ENCODE measurements at regions of chr4 and their contacts with region 1.

Region 1: GRCh38 chr4:2241410-2242353 is at the starts of genes HAUS3 and POLN:
- DNase-seq: peak; percentile 98
- H3K4me3 ChIP-seq: peak within 1 kb of the TSS; percentile 86
- H3K27ac ChIP-seq: peak within 1 kb of the TSS; percentile 71
- H3K4me1 ChIP-seq: peaks cover 56% of the 10 kb centered on the region
- CTCF ChIP-seq: 0 out of 2 replicates have a peak, but pooled peaks have one; percentile 10
- total RNA-seq, gene HAUS3: 15.9 and 20.1 TPM in 2 replicates
- total RNA-seq, gene POLN: 2.7 and 4.4 TPM in 2 replicates

Region 2: GRCh38 chr4:1721004-1721665 is 520.5 kb before region 1 on chr4 and contains the starts of genes TACC3 and TMEM129:
- CTCF ChIA-PET with region 1: no interaction called
- POLR2A ChIA-PET with region 1: no interaction called
- intact Hi-C with region 1: loop called (anchors 5 kb)
- DNase-seq: peak; percentile 98
- H3K4me3 ChIP-seq: peak within 1 kb of the TSS; percentile 94
- H3K27ac ChIP-seq: peak within 1 kb of the TSS; percentile 90
- H3K4me1 ChIP-seq: peaks cover 75% of the 10 kb centered on the region
- CTCF ChIP-seq: no peak
- total RNA-seq, gene TACC3: 100 and 130 TPM in 2 replicates
- total RNA-seq, gene TMEM129: 35.1 and 44.0 TPM in 2 replicates

Region 3: DNA sequence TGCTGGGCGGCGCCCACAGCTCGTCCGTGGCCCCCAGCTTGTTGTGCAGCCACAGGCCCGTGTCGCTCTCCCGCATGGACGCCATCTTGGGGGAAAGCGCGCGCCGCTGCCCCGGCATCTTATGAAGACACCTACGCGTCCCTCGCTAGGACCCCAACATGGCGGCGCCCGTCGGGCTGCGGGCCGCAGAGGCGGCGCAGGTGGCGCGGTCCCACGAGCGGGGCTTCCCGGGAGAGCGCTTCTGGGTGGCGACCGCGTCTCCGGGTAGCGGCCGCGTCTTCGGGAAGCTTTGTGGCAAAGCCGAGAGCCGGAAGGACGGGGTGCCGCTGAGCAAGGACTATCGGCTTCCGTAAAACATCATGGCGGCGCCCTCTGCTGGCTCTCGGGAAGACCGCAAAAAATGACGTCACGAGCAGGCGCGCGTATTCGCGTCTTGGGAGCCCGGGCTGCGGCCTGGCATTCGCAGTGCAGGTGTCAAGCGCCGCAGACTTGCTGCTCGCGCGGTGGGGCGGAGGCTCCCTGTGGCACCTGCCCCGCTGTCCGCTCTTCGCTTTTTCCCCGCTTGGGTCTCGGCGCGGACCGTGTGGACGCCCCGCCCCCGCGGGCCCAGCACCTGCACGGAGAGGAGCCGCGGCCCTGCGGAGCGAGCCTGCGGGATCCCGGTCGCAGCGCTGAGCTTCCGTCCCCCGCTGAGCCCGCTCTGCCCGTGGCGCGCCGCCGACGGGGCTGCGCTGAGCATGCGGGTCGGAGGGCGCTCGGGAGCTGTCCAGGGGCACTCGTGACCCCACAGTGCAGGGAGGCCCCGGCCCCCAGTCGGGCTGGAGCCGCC is 232.6 kb before region 1 on chr4 and contains the start of gene NELFA:
- CTCF ChIA-PET with region 1: no interaction called
- POLR2A ChIA-PET with region 1: no interaction called
- intact Hi-C with region 1: loop called (anchors 5 kb)
- DNase-seq: peak; percentile 98
- H3K4me3 ChIP-seq: peak within 1 kb of the TSS; percentile 97
- H3K27ac ChIP-seq: peak within 1 kb of the TSS; percentile 76
- H3K4me1 ChIP-seq: peaks cover 23% of the 10 kb centered on the region
- CTCF ChIP-seq: 0 out of 2 replicates have a peak, but pooled peaks have one; percentile 34
- total RNA-seq, gene NELFA: 43.5 and 45.5 TPM in 2 replicates

Region 4: DNA sequence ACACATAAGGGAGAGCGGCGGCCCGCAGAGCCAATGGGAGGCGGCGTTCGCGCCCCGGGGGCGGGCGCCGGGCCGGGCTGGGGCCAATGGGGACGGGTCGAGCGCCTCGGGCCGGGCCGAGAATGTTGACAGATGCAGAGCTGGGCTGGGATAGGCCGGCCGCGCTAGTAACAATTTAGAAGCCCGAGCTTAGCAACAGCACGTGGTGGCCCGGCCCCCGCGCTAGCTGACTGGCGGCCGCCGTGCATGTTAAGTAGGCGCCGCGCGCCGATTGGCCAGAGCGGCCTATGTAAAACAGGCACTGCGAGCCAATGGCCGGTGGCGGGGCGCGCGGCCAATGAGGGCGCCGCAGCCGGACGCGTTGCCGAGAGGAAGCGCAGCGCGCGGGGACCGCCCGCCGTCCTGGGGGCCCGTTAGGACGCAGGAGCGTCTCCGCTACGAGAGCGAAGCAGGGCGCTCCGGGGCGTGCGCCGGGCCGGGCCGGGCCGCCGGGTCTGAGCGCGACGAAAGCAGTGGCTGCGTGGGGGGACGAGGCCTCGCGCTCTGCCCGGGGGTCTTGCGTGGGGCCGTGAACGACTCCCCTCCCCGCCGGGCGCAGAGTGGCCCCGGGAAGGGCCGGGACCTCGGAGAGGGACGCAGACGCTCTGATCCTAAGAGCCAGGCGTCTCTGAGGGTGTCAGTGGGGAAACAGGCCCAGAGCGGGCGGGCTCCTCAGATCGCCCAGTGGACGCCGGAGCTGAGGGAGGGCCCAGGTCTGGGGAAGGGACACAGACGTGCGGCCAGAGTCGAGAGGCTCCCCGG is 20.7 kb after region 1 on chr4:
- CTCF ChIA-PET with region 1: no interaction called
- POLR2A ChIA-PET with region 1: interaction called, 7 read pairs
- intact Hi-C with region 1: loop called (anchors 1 kb)
- DNase-seq: peak; percentile 100
- H3K4me3 ChIP-seq: peak overlapping the region; percentile 71
- H3K27ac ChIP-seq: peak overlapping the region; percentile 49
- H3K4me1 ChIP-seq: peaks cover 20% of the 10 kb centered on the region
- CTCF ChIP-seq: no peak

Region 5: GRCh38 chr4:2274320-2275043 is 32.8 kb after region 1 on chr4:
- CTCF ChIA-PET with region 1: no interaction called
- POLR2A ChIA-PET with region 1: no interaction called
- intact Hi-C with region 1: no loop called
- DNase-seq: no peak
- H3K4me3 ChIP-seq: no peak overlapping the region
- H3K27ac ChIP-seq: no peak overlapping the region
- H3K4me1 ChIP-seq: no peaks in the 10 kb centered on the region
- CTCF ChIP-seq: no peak

Region 6: GRCh38 chr4:2290974-2291704 is 49.5 kb after region 1 on chr4:
- CTCF ChIA-PET with region 1: no interaction called
- POLR2A ChIA-PET with region 1: no interaction called
- intact Hi-C with region 1: loop called (anchors 5 kb)
- DNase-seq: peak; percentile 78
- H3K4me3 ChIP-seq: no peak overlapping the region
- H3K27ac ChIP-seq: peak overlapping the region; percentile 38
- H3K4me1 ChIP-seq: peaks cover 24% of the 10 kb centered on the region
- CTCF ChIP-seq: no peak

Region 7: DNA sequence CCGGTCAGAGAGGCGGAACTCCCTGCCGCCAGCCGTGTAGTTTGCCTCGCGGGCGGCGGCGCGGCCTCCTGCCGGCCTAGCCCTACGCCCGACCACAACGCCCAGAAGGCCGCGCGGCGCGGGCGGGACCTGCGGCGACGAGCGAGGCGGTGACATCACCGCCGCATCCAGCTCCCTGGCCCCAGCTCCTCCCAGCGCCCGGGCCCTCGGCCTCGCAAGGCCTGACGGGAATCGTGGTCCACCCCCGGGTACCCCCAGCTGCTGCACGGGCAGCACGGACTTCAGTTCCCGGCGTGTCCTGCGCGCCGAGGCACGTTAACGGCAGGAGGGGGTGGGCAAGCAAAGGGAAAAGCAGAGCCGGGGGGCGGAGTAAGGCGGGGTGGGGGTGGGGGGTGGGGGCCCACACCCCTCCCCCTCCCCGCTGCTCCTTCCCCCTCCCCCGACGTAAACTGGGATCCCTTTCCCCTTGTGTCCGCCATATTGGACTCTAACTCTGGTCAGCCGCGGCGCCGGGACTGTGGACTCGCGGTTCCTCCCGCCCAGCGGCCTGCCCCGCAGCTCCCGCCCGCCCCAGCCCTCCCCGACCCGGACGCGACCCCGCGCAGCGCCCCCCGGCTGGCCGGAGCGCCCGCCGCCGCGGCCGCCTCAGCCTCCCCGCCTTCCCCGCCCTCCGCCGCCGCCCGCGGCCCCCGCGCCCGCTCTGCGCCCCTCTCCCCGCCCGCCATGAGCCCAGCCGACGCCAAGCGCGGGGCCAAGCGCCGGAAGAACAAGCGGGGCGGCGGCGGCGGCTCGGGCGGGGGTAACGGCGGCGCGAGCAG is 294.7 kb after region 1 on chr4 and contains the start of gene FAM193A:
- CTCF ChIA-PET with region 1: no interaction called
- POLR2A ChIA-PET with region 1: interaction called, 3 read pairs
- intact Hi-C with region 1: loop called (anchors 1 kb)
- DNase-seq: peak; percentile 100
- H3K4me3 ChIP-seq: peak within 1 kb of the TSS; percentile 95
- H3K27ac ChIP-seq: peak within 1 kb of the TSS; percentile 68
- H3K4me1 ChIP-seq: peaks cover 15% of the 10 kb centered on the region
- CTCF ChIP-seq: no peak
- total RNA-seq, gene FAM193A: 17.1 and 17.8 TPM in 2 replicates